HEK293 (cell line): ENCODE measurements at regions of chr2 and their contacts with region 1.

Region 1: GRCh38 chr2:224187220-224187619 is 148.1 kb upstream of the SERPINE2 start:
- H3K4me3 ChIP-seq: no peak overlapping the region
- H3K27ac ChIP-seq: no peak overlapping the region
- H3K4me1 ChIP-seq: no peaks in the 10 kb centered on the region
- CTCF ChIP-seq: no peak

Region 2: DNA sequence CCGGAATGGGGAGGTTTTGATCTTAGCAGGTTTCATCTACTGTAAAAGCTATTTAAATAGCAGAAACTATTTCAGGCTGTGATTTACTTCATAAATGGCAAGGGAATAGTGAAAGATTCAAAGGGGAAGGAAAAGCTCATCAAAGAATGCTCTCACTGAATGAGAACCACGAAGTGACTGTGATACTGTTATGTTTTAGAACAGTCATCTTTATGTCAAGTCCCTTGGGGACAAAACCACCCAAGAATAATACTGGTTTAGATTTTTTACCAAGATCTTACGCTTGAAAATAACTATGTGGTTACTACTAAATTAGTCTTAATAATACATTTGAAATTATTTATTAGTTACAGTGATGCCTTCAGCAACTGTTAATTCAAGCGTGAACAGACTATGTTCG is 1559.5 kb before region 1 on chr2:
- CTCF ChIA-PET with region 1: interaction called, 10 read pairs
- POLR2A ChIA-PET with region 1: no interaction called
- H3K4me3 ChIP-seq: no peak overlapping the region
- H3K27ac ChIP-seq: no peak overlapping the region
- H3K4me1 ChIP-seq: no peaks in the 10 kb centered on the region
- CTCF ChIP-seq: no peak

Region 3: DNA sequence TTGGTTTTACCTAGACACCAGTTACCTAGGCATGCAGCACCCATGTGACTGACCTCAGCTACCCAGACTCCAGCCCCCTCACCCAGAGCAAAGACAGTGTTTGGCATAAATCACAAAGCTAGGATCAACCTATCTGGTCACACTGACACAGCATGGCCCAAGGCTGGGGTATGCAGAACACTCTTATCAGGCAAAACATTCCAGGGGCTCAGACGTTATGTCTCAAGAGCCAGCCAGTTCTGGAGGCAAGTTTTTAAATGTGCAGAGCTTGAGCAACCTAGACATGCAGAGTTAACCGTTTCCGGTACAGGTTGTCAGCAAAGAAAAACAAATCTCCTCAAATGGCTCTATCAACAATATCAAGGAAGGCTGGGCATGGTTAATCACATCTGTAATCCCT is 442.6 kb before region 1 on chr2:
- CTCF ChIA-PET with region 1: no interaction called
- POLR2A ChIA-PET with region 1: no interaction called
- H3K4me3 ChIP-seq: no peak overlapping the region
- H3K27ac ChIP-seq: no peak overlapping the region
- H3K4me1 ChIP-seq: no peaks in the 10 kb centered on the region
- CTCF ChIP-seq: no peak